MCF 10A (cell line): ENCODE measurements at regions of chr4 and their contacts with region 1.

Region 1: GRCh38 chr4:85968945-85969819 is 390.7 kb downstream of the MAPK10 start:
- DNase-seq: peak; percentile 73
- H3K4me3 Mint-ChIP-seq: no peak overlapping the region
- H3K27ac Mint-ChIP-seq: no peak overlapping the region
- H3K4me1 Mint-ChIP-seq: peaks cover 5% of the 10 kb centered on the region
- H3K27me3 Mint-ChIP-seq: no peaks in the 10 kb centered on the region
- CTCF ChIP-seq: peak; percentile 46

Region 2: DNA sequence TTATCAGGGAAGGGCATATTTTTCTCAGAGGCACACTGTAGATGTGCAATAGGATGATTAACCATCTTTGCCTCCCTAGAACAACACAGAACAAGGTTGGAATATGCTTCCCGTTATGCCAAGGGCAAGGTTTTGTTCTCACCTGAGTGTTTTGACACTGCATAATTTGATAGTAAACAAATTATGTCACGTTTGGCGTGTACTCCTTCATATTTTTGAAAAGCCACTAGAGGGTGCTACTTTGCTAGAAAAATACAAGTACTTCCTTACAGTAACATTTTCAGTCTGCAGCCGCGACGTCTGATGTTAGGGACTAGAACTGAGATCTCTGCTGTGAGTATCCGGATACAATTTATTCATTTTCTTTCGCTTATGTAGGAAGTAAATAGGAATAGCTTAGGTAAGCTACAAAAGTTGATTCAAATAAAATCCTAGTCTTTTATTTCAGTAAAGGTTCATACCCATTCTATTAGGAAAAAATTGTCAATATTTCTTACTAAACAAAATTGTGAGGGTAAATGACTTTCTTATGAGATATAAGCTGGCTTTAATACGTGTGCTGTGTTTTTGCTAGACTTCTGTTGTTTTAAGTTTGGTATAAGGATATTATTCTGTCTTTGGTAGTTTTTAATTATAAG is 821.6 kb before region 1 on chr4:
- CTCF ChIA-PET with region 1: interaction called, 4 read pairs
- POLR2A ChIA-PET with region 1: no interaction called
- intact Hi-C with region 1: loop called (anchors 5 kb)
- DNase-seq: peak; percentile 74
- H3K4me3 Mint-ChIP-seq: no peak overlapping the region
- H3K27ac Mint-ChIP-seq: no peak overlapping the region
- H3K4me1 Mint-ChIP-seq: peaks cover 11% of the 10 kb centered on the region
- H3K27me3 Mint-ChIP-seq: no peaks in the 10 kb centered on the region
- CTCF ChIP-seq: peak; percentile 68

Region 3: GRCh38 chr4:85756938-85757337 is 212.2 kb before region 1 on chr4:
- CTCF ChIA-PET with region 1: interaction called, 5 read pairs
- POLR2A ChIA-PET with region 1: no interaction called
- intact Hi-C with region 1: loop called (anchors 1 kb)
- DNase-seq: peak; percentile 61
- H3K4me3 Mint-ChIP-seq: no peak overlapping the region
- H3K27ac Mint-ChIP-seq: no peak overlapping the region
- H3K4me1 Mint-ChIP-seq: peaks cover 2% of the 10 kb centered on the region
- H3K27me3 Mint-ChIP-seq: no peaks in the 10 kb centered on the region
- CTCF ChIP-seq: peak; percentile 19

Region 4: DNA sequence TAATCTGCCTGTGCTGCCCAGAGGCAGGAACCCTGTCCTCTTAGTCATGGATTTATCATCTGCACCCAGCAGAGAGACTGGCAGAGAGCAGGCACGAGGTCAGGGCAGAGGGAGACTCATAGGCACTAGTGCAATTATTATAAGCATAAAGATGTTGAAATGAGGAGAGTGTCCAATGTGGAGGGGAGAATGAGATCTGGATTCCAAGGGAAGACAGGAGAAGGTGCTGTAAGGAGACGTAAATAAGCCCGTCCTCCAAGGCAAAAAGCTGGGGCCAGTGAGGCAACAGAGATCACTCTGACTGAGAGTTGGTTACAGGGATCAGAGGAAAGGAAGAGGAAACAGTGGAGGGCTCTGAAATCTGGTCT is 15.5 kb before region 1 on chr4:
- CTCF ChIA-PET with region 1: interaction called, 25 read pairs
- POLR2A ChIA-PET with region 1: interaction called, 3 read pairs
- intact Hi-C with region 1: no loop called
- DNase-seq: peak; percentile 95
- H3K4me3 Mint-ChIP-seq: peak overlapping the region; percentile 2
- H3K27ac Mint-ChIP-seq: peak overlapping the region; percentile 77
- H3K4me1 Mint-ChIP-seq: peaks cover 28% of the 10 kb centered on the region
- H3K27me3 Mint-ChIP-seq: no peaks in the 10 kb centered on the region
- CTCF ChIP-seq: no peak

Region 5: GRCh38 chr4:86043755-86044592 is 74.8 kb after region 1 on chr4:
- CTCF ChIA-PET with region 1: interaction called, 11 read pairs
- POLR2A ChIA-PET with region 1: no interaction called
- intact Hi-C with region 1: loop called (anchors 1 kb)
- DNase-seq: peak; percentile 71
- H3K4me3 Mint-ChIP-seq: no peak overlapping the region
- H3K27ac Mint-ChIP-seq: no peak overlapping the region
- H3K4me1 Mint-ChIP-seq: peaks cover 5% of the 10 kb centered on the region
- H3K27me3 Mint-ChIP-seq: no peaks in the 10 kb centered on the region
- CTCF ChIP-seq: peak; percentile 66

Region 6: DNA sequence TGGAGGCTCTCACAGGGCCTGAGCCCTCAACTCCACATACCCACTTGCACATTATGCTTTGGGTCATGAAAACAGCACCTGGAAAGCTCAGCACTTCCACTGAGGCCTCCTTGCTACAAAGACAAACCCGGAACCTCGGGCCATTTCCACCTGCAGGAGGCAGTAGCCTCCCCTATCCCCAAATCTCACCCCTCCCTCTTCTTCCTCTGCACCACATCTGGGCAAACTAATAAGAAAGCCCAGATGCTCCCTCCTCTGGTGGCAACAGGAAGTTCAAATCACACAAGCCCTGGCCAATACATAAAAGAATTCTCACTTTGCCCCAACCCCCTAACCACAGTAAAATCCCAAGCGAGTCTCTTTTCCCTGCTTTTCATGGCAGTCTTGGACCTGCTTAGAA is 254.3 kb after region 1 on chr4:
- CTCF ChIA-PET with region 1: interaction called, 5 read pairs
- POLR2A ChIA-PET with region 1: no interaction called
- intact Hi-C with region 1: loop called (anchors 2 kb)
- DNase-seq: peak; percentile 63
- H3K4me3 Mint-ChIP-seq: no peak overlapping the region
- H3K27ac Mint-ChIP-seq: peak overlapping the region; percentile 41
- H3K4me1 Mint-ChIP-seq: peaks cover 20% of the 10 kb centered on the region
- H3K27me3 Mint-ChIP-seq: no peaks in the 10 kb centered on the region
- CTCF ChIP-seq: peak; percentile 61

Region 7: DNA sequence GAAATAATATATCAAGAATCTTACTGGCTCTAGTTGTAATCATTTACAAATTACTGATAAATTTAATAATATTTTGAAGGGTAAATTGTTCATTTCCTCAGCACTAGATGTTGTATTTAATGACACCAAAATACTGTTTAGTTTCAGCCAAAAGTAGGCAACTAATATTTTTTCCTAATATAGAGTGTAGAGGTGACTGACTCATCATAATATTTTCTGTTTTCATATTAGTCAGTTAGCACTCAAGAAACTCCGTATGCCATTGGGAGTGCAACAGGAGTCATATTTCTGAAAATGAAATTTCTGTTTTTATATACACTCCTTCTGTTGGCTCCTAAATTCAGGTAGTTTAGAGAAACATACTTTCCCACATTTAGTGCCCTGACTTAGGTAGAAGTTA is 588.3 kb after region 1 on chr4:
- CTCF ChIA-PET with region 1: no interaction called
- POLR2A ChIA-PET with region 1: no interaction called
- intact Hi-C with region 1: no loop called
- DNase-seq: peak; percentile 52
- H3K4me3 Mint-ChIP-seq: no peak overlapping the region
- H3K27ac Mint-ChIP-seq: peak overlapping the region; percentile 97
- H3K4me1 Mint-ChIP-seq: peaks cover 21% of the 10 kb centered on the region
- H3K27me3 Mint-ChIP-seq: no peaks in the 10 kb centered on the region
- CTCF ChIP-seq: no peak